Mammary epithelial cell (primary cell): ENCODE measurements at regions of chr12 and their contacts with region 1.

Region 1: DNA sequence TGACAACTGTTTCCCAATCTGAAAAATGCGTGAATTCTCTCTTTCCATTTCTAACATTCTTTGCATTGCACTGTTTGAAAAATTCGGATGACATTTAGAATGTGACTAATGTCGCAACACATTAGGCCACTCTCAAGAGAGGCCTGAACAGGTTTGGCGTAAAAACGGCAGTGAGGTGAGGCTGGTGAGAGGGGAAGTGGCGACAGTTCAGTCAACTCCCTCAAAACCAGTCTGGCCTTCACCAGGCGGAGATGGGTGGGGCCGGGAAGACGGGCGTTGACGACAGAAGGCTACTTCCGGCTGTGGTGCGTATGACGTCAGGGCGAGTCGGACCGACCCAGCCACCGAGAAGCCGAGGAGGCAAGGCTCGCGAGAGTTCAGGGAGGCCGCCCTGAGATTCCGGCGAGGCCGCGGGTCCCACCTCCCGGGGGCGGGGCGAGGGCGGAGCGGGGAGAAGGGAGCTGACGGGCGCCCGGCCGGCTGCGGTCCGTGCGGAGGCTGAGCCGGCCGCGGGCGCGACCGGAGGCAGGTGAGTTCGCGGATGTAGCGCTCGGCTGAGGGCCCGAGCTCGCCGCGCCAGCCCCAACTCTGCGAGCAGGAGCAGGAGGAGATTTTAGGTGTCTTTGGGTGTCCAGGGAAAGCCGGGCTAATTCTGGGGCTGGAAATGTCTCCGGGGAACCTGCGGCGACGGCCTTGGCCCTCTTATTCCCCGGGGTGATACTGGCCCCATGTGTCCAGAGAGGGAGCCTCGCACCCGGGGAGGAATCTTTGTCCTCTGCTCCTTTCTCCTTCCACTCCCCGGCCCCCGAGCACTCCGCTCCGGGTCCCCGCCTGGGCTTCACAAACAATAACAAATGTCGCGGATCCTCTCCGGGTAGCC is at the start of gene STK38L:
- DNase-seq: peak; percentile 91
- H3K4me3 ChIP-seq: peak within 1 kb of the TSS; percentile 81 to 99 (median 86)
- H3K27ac ChIP-seq: peak within 1 kb of the TSS; percentile 90
- H3K4me1 ChIP-seq: peaks cover 20% of the 10 kb centered on the region
- H3K27me3 ChIP-seq: no peaks in the 10 kb centered on the region
- CTCF ChIP-seq: peak; percentile 7 to 52
- total RNA-seq, gene STK38L: 30.9 to 33.2 TPM

Region 2: GRCh38 chr12:27161458-27162228 is 82.4 kb before region 1 on chr12:
- CTCF ChIA-PET with region 1: no interaction called
- dilution Hi-C with region 1: no loop called
- in situ Hi-C with region 1: no loop called
- intact Hi-C with region 1: loop called (anchors 5 kb)
- DNase-seq: no peak
- H3K4me3 ChIP-seq: no peak overlapping the region
- H3K27ac ChIP-seq: no peak overlapping the region
- H3K4me1 ChIP-seq: peaks cover 10% of the 10 kb centered on the region
- H3K27me3 ChIP-seq: no peaks in the 10 kb centered on the region
- CTCF ChIP-seq: no peak

Region 3: GRCh38 chr12:27176787-27177186 is 67.3 kb before region 1 on chr12:
- CTCF ChIA-PET with region 1: no interaction called
- dilution Hi-C with region 1: no loop called
- in situ Hi-C with region 1: no loop called
- intact Hi-C with region 1: loop called (anchors 1 kb)
- DNase-seq: peak; percentile 84
- H3K4me3 ChIP-seq: no peak overlapping the region
- H3K27ac ChIP-seq: peak overlapping the region; percentile 64
- H3K4me1 ChIP-seq: peaks cover 39% of the 10 kb centered on the region
- H3K27me3 ChIP-seq: no peaks in the 10 kb centered on the region
- CTCF ChIP-seq: no peak

Region 4: DNA sequence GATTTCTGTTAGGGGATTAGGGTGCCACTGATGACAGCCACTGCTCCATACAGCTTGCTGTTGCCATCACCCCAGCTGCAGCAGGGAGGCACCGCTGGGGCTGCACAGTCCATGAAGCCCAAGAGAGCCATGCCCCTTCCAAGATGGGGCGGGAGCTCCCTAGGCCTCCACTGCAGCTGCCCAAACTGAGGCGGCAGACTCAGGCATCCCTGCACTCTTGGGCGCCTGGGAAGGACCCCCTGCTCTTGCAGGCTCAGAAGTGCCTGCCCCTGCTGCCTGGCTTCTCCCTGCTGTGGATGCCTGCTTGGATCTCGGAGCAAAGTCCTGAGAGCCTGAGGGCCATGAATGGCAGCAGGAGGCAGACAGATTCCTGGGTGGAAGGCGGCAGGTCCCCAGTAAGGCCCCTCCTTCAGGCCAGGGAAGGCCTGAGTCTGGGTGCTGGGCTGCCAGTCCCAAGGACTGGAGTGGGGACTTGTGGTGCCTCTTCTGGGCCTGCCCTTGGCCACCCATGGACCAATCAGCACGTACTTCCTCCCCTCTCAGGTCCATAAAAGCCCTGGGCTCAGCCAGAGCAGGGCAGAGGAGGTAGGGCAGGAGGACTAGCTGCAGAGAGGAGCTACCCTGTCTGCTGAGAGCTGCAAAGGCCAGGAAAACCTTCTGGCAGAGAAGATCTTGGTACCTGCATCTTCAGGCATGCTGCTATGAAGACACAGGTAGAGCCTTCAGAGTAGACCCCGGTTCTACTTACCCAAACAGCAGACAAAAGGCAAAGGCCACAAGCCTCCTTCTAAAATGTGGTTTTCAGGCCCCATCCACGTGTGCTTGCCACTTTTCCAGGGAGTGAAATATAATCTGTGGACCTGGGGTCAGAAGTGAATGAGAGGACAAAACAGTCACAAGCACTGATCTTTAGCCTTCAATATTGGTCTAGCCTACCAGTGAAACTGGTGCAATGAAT is 29.9 kb before region 1 on chr12:
- CTCF ChIA-PET with region 1: no interaction called
- dilution Hi-C with region 1: no loop called
- in situ Hi-C with region 1: no loop called
- intact Hi-C with region 1: no loop called
- DNase-seq: no peak
- H3K4me3 ChIP-seq: no peak overlapping the region
- H3K27ac ChIP-seq: no peak overlapping the region
- H3K4me1 ChIP-seq: no peaks in the 10 kb centered on the region
- H3K27me3 ChIP-seq: no peaks in the 10 kb centered on the region
- CTCF ChIP-seq: no peak

Region 5: GRCh38 chr12:27305673-27306456 is 61.8 kb after region 1 on chr12:
- CTCF ChIA-PET with region 1: no interaction called
- dilution Hi-C with region 1: no loop called
- in situ Hi-C with region 1: no loop called
- intact Hi-C with region 1: loop called (anchors 5 kb)
- DNase-seq: no peak
- H3K4me3 ChIP-seq: no peak overlapping the region
- H3K27ac ChIP-seq: no peak overlapping the region
- H3K4me1 ChIP-seq: no peaks in the 10 kb centered on the region
- H3K27me3 ChIP-seq: no peaks in the 10 kb centered on the region
- CTCF ChIP-seq: peak; percentile 37 to 45